A549 (cell line): ENCODE measurements at regions of chr22 and their contacts with region 1.

Region 1: DNA sequence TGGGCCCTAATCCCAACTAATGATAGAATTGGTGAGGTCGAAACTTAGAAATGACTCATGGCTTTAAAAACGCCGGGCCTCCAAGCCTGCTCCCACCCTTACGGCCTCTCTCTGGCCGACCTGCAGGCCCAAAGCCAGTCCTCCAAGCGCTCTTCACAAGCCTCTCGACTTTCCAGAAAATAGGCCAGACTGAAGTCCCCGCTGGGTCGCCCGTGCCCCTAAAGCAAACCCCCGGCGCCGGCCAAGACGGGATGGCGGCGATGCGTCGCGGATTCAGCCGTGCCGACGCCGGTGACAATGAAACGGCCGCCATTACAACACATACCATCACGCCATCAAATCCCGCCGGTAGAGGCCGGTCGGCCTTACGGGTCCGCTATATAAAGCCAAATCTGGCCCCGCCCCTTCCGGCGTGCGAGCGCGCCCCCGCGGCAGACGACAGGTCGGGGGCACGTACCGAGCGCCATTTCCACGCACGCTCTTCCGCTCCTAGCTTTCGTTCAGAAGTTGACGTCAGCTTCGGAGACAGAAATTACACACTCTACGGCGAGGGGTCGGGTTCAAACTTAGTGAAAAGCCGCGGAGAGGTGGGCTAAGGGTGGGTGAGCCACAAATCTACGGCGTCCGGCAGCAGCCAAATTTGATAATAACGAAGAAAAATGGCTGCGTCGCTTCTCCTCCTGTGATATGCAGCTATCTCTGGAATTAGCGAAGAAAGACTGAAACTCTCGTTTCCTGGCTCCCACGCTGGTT is at the start of gene RPL3:
- DNase-seq: peak; percentile 78 to 98
- ATAC-seq: peak; percentile 76 to 79
- H3K4me3 ChIP-seq: peak within 1 kb of the TSS; percentile 99
- H3K27ac ChIP-seq: peak within 1 kb of the TSS; percentile 90 to 97
- H3K4me1 ChIP-seq: peaks cover 18% of the 10 kb centered on the region
- CTCF ChIP-seq: no peak
- EP300 ChIP-seq: no peak
- POLR2A ChIP-seq: peak; percentile 98
- RAD21 ChIP-seq: no peak
- polyA plus RNA-seq, gene RPL3: 1,852 and 1,921 TPM in 2 replicates

Region 2: DNA sequence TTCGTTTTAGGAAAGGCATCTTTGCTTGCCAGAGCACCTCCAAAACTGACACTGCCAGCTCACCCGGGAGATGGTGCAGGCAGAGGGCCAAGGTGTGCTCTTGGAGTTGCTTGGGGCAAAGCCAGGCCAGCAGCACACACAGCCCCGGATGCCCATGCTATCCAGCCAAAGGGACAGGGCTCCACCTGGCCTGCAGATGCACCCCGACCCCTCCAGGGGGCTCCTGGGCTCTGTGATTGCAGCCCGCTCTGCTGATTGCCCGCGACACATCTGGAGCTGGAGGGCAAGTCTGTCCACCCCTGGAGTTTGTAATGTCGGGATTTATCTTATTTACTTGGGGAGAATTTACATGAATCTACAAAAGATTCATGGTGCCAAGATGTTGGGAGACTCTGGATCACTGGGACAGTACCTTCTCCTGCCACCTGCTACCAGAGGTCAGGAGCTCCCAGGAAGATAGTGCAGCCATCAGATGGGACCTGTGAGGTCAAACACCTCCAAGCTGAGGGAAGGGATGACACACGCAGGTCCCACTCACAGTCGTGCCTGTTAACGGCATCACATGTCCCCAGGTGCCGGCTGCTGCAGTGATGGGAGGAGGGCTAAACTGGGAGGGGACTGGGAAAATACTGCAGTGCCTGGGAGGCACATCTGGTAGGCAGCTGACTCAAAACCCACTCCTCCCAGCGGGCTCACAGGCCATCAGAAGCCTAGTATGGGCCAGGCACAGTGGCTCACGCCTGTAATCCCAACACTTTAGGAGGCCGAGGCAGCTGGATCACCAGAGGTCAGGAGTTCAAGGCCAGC is 184.2 kb before region 1 on chr22:
- CTCF ChIA-PET with region 1: interaction called, 12 read pairs
- POLR2A ChIA-PET with region 1: interaction called, 4 read pairs
- DNase-seq: peak; percentile 49 to 68
- ATAC-seq: peak; percentile 94 to 96
- H3K4me3 ChIP-seq: no peak overlapping the region
- H3K27ac ChIP-seq: no peak overlapping the region
- H3K4me1 ChIP-seq: 0 out of 3 replicates have a peak, but pooled peaks cover 9% of the 10 kb centered on the region
- CTCF ChIP-seq: peak; percentile 47
- EP300 ChIP-seq: no peak
- POLR2A ChIP-seq: no peak
- RAD21 ChIP-seq: peak; percentile 61 to 72

Region 3: GRCh38 chr22:39152511-39153219 is 166.8 kb before region 1 on chr22 and contains the start of gene CBX7:
- CTCF ChIA-PET with region 1: interaction called, 13 read pairs
- POLR2A ChIA-PET with region 1: interaction called, 14 read pairs
- DNase-seq: peak; percentile 78 to 81
- ATAC-seq: peak; percentile 82 to 88
- H3K4me3 ChIP-seq: peak within 1 kb of the TSS; percentile 51
- H3K27ac ChIP-seq: peak within 1 kb of the TSS; percentile 71 to 90
- H3K4me1 ChIP-seq: peaks cover 10% of the 10 kb centered on the region; the same call in 1 of the 3 replicates
- CTCF ChIP-seq: no peak
- EP300 ChIP-seq: no peak
- POLR2A ChIP-seq: no peak
- RAD21 ChIP-seq: no peak
- polyA plus RNA-seq, gene CBX7: 0.79 and 1.3 TPM in 2 replicates

Region 4: GRCh38 chr22:39170825-39171622 is 148.4 kb before region 1 on chr22:
- CTCF ChIA-PET with region 1: interaction called, 70 read pairs
- POLR2A ChIA-PET with region 1: interaction called, 16 read pairs
- DNase-seq: peak; percentile 54 to 68
- ATAC-seq: peak; percentile 77 to 89
- H3K4me3 ChIP-seq: no peak overlapping the region
- H3K27ac ChIP-seq: peak overlapping the region; percentile 92 to 95
- H3K4me1 ChIP-seq: peaks cover 48% of the 10 kb centered on the region
- CTCF ChIP-seq: peak; percentile 84
- EP300 ChIP-seq: no peak
- POLR2A ChIP-seq: no peak
- RAD21 ChIP-seq: peak; percentile 93 to 96

Region 5: DNA sequence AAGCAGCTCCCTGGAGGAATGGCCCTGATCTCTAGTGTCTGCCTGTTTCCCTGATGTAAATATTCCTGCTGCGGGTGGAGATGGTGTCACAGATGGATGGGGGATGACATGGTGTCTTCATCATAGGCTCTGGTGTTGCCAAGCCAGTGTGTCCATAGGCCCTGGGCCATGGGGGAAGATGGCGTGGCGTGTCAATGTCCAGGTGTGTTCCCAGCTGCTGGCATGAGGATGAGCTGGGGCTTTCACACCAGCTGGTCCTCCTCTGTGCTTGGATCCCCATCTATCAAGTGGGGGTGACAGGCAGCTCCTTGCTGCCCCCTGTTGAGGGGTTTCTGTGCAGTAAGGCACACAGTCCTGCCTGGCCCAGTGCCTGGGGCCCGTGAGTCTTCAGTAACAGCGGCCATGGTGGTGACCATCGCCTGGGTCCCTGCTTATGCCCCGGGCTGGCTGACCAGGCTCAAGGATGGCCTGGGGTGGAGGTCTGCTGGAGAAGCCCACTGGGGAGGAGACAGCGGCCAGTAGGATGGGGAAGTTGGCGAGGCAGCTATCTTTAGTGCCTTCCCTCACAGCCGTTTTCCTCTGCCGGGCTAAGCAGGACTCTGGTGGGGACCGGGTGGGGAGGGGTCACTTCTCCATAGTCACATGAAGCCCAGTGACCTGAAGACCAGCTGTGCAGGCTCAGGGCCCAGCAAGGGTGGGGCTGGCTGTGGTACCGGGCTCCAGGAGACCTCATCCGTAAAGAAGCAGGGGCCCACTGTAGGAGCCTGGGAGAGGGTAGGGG is 12.7 kb before region 1 on chr22:
- CTCF ChIA-PET with region 1: interaction called, 15 read pairs
- POLR2A ChIA-PET with region 1: interaction called, 33 read pairs
- DNase-seq: peak in 1 of 2 experiments; percentile 54
- ATAC-seq: 0 out of 6 replicates have a peak, but pooled peaks of 1 of the 2 experiments have one; percentile 3
- H3K4me3 ChIP-seq: no peak overlapping the region
- H3K27ac ChIP-seq: peak overlapping the region; percentile 94 to 95; a peak in 5 of 6 replicates
- H3K4me1 ChIP-seq: peaks cover 33% of the 10 kb centered on the region
- CTCF ChIP-seq: peak; percentile 33; the same call in 2 of the 3 replicates
- EP300 ChIP-seq: no peak
- POLR2A ChIP-seq: no peak
- RAD21 ChIP-seq: peak; percentile 52 to 72

Region 6: GRCh38 chr22:39343259-39344048 is 24.0 kb after region 1 on chr22:
- CTCF ChIA-PET with region 1: interaction called, 11 read pairs
- POLR2A ChIA-PET with region 1: interaction called, 13 read pairs
- DNase-seq: peak; percentile 61 to 65
- ATAC-seq: peak; percentile 96 to 98
- H3K4me3 ChIP-seq: no peak overlapping the region
- H3K27ac ChIP-seq: no peak overlapping the region
- H3K4me1 ChIP-seq: peaks cover 5% of the 10 kb centered on the region; the same call in 1 of the 3 replicates
- CTCF ChIP-seq: peak; percentile 50
- EP300 ChIP-seq: no peak
- POLR2A ChIP-seq: no peak
- RAD21 ChIP-seq: peak; percentile 26 to 43; a peak in 3 of 5 replicates

Region 7: DNA sequence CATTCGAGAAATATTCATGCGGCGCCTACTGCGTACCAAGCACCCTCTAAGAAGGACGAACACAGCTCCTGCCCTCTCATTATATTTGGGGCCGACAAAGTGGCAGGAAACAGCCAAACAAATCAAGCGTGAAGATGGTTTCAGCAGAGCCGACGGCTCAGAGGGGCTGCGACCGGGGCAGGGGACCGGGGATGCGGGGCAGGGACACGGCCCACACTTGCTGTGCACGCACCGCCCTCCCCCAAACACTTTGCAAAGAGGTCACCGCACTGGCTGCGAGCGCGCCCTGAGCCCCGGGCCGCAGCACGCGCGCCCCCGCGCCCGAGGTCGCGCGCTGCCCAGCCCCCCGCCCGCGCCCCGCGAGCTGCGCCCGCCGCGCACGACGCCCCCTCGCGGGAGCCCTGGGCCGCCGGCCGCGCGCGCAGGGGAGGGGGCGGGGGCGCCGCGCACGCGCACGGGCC is 30.1 kb after region 1 on chr22:
- CTCF ChIA-PET with region 1: interaction called, 4 read pairs
- POLR2A ChIA-PET with region 1: interaction called, 13 read pairs
- DNase-seq: peak in 1 of 2 experiments; percentile 36
- ATAC-seq: peak; percentile 52 to 69; a peak in 5 of 6 replicates
- H3K4me3 ChIP-seq: peak overlapping the region; percentile 72
- H3K27ac ChIP-seq: peak overlapping the region; percentile 75 to 98
- H3K4me1 ChIP-seq: peaks cover 4% of the 10 kb centered on the region; the same call in 1 of the 3 replicates
- CTCF ChIP-seq: no peak; the same call in 2 of the 3 replicates
- EP300 ChIP-seq: no peak
- POLR2A ChIP-seq: peak; percentile 23; the same call in 1 of the 2 replicates
- RAD21 ChIP-seq: no peak